Upper lobe of right lung (tissue), 1 donor: ENCODE measurements at regions of chr5 and their contacts with region 1.

Region 1: GRCh38 chr5:91101600-91102379 is 281.3 kb downstream of the ARRDC3 start:
- DNase-seq: peak; percentile 75
- ATAC-seq: peak; percentile 100
- H3K4me3 ChIP-seq: no peak overlapping the region
- H3K27ac ChIP-seq: no peak overlapping the region
- H3K4me1 ChIP-seq: peaks cover 4% of the 10 kb centered on the region
- H3K27me3 ChIP-seq: no peaks in the 10 kb centered on the region
- CTCF ChIP-seq: peak; percentile 75

Region 2: DNA sequence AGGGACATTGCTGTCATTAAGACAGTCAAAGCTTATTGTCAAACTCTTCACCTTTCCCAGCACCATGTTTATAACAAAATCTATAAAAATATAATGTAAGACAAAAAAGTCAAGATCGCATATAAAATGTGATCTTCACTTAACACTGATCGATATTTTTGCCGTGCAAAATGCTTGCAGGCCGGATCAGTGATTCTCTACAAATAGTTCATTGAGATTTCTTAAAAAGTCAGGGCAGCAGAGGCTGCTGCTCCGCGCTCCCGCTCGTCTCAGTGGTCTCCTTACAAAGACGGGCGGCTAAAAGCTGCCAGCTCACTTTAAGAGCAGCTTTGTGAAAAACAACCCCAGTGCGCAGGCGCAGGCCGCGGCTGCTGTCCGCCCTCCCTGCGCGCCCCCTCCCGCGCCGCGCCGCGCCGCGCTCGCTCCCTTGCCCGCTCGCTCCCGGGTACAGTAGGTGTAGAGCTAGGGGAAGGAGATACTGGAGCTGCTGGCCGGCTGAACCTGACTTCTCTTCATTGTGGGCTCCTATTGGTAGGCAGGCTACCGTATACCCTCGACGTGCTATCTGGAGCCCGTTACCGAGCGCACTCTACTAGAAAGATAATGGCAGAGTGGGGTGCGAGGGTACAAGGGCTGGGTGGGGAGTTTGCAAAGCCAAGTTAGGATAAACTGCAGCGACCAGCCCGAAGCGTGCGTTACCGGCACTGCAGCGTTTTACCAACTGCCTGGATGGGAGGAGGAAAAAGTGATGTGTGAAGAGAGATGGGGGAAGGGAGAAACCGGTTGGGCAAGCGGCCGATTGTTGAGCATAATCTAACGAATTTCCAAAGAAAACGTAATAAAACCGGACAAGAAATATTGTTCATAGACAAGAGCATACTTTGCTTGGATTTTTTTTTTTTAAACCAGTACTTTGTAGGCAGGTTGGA is 281.5 kb after region 1 on chr5 and contains the start of gene ARRDC3:
- intact Hi-C with region 1: loop called (anchors 10 kb)
- DNase-seq: peak; percentile 98
- ATAC-seq: peak; percentile 83
- H3K4me3 ChIP-seq: peak within 1 kb of the TSS; percentile 72
- H3K27ac ChIP-seq: peak within 1 kb of the TSS; percentile 100
- H3K4me1 ChIP-seq: peaks cover 19% of the 10 kb centered on the region
- H3K27me3 ChIP-seq: no peaks in the 10 kb centered on the region
- CTCF ChIP-seq: no peak
- total RNA-seq, gene ARRDC3: 103 TPM